Activated T-helper 2 cell treated with anti-CD3 and anti-CD28 coated beads, Interferon-gamma antibody, Interleukin-2, Interleukin-4, amounts not matched to agents 10 μg/mL and 5 μg/mL and 100 μg/mL, durations not matched to agents 14 hours and 24 hours and 36 hours (primary cell): ENCODE measurements at regions of chr3 and their contacts with region 1.

Region 1: DNA sequence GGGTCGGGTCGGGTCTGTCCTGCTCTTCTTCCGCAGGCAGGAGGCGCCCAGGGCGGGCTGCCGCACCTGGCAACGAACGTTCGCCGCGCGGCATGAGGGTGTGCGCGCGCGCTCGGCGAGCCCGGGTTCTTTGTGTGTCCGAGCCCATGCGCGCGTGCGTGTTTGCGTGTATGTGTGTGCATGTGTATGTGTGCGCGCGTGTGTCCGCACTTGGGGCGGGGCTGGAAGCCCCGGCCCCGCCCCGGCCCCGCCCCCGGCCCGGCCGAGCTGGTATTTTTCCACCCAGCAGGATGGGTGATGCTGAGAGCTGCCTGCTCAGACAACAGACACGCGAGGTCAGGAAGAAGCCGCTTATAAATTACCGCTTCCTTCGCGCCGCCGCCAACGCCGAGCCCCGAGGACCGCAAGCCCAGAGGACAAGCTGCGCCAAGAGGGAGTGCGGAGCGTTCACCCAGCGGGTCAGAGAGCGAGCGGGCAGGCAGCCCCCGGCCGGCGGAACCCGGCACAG is at the start of gene SLC6A6:
- DNase-seq: peak; percentile 91
- H3K4me3 Mint-ChIP-seq: peak within 1 kb of the TSS; percentile 93
- H3K27ac Mint-ChIP-seq: peak within 1 kb of the TSS; percentile 95
- H3K4me1 Mint-ChIP-seq: peaks cover 35% of the 10 kb centered on the region
- H3K27me3 Mint-ChIP-seq: no peaks in the 10 kb centered on the region
- total RNA-seq, gene SLC6A6: 55.1 and 55.8 TPM in 2 replicates

Region 2: DNA sequence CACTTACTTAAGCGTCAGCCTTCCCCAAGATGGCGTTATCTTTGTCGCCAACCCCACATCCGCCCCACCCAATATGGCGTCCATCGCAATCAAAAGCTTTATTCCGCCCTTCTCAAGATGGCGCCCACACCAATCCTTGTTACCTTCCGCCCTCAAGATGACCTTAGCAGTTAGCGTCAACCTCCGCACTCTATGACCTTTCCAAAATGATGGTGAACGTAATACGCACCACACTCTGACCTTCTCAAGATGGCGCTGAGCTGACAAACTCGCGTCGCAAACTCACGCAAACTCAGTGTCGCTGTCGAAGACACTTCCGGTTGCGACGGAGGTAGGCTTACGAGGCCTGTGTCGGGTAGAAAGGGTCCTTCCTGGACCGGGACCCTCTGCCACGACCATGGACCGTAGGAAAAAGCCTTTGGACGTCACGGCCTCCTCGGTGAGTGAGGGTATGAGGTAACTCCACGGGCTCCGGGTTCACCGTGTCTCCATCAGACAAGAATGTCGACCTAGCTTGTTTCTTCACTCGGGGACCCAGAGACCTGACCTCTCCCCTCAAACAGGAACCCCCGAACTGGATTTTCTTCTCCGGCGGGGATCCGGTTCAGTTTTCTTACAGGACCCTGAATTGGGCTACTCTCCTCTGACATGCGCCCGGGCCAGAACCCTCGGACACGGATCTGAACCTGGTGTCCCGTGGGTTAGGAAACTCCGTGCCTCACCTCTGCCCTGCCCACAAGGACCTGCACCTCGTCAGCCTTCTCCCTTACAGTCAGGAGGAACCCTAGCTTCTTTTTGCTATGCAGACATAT is 249.3 kb after region 1 on chr3 and contains the start of gene CCDC174:
- intact Hi-C with region 1: loop called (anchors 2 kb)
- DNase-seq: peak; percentile 94
- H3K4me3 Mint-ChIP-seq: peak within 1 kb of the TSS; percentile 92
- H3K27ac Mint-ChIP-seq: peak within 1 kb of the TSS; percentile 95
- H3K4me1 Mint-ChIP-seq: peaks cover 30% of the 10 kb centered on the region
- H3K27me3 Mint-ChIP-seq: no peaks in the 10 kb centered on the region
- total RNA-seq, gene CCDC174: 15.0 and 18.8 TPM in 2 replicates